SK-N-SH (cell line): ENCODE measurements at regions of chr5 and their contacts with region 1.

Region 1: GRCh38 chr5:173615884-173616576 is 420 bp downstream of the BOD1 start:
- DNase-seq: peak; percentile 72
- H3K4me3 ChIP-seq: peak overlapping the region; percentile 91 to 96
- H3K27ac ChIP-seq: peak overlapping the region; percentile 81 to 88
- H3K4me1 ChIP-seq: peaks cover 13 to 24% of the 10 kb centered on the region in 2 experiments; a peak in 3 of 4 replicates
- H3K27me3 ChIP-seq: no peaks in the 10 kb centered on the region
- CTCF ChIP-seq: peak; percentile 68
- EP300 ChIP-seq: no peak
- RAD21 ChIP-seq: peak; percentile 37

Region 2: DNA sequence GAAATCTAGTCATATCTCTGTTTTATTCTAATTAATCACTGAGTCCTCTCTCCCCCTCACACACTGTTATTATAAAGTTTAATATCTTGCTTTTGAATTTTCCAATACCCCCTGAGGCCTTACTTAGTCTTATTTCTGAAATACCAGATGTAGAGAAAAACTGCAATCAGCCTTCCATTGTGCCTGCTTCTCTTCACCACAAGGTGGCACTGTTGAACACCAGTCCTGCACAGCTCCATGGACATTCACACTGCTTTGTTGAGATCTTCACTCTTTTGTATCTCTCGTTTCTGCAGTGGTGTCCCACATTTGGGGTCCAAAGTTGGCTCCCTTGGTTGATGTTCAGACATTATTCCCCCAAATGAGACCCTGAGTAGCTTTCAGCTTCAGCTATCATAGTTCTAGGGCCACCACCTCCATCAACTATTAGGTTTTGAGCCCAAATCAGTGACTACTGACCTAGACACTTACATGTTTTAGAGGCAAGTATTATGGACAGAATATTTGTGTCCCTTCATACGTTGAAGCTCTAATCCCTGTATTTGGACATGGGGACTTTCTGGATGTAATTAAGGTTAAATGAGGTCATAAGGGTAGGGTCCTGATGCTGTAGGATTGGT is 23.9 kb before region 1 on chr5:
- CTCF ChIA-PET with region 1: interaction called, 13 read pairs
- POLR2A ChIA-PET with region 1: no interaction called
- DNase-seq: peak; percentile 35
- H3K4me3 ChIP-seq: no peak overlapping the region
- H3K27ac ChIP-seq: no peak overlapping the region
- H3K4me1 ChIP-seq: no peaks in the 10 kb centered on the region
- H3K27me3 ChIP-seq: no peaks in the 10 kb centered on the region
- CTCF ChIP-seq: peak; percentile 64
- EP300 ChIP-seq: no peak
- RAD21 ChIP-seq: no peak; the same call in 1 of the 2 replicates

Region 3: DNA sequence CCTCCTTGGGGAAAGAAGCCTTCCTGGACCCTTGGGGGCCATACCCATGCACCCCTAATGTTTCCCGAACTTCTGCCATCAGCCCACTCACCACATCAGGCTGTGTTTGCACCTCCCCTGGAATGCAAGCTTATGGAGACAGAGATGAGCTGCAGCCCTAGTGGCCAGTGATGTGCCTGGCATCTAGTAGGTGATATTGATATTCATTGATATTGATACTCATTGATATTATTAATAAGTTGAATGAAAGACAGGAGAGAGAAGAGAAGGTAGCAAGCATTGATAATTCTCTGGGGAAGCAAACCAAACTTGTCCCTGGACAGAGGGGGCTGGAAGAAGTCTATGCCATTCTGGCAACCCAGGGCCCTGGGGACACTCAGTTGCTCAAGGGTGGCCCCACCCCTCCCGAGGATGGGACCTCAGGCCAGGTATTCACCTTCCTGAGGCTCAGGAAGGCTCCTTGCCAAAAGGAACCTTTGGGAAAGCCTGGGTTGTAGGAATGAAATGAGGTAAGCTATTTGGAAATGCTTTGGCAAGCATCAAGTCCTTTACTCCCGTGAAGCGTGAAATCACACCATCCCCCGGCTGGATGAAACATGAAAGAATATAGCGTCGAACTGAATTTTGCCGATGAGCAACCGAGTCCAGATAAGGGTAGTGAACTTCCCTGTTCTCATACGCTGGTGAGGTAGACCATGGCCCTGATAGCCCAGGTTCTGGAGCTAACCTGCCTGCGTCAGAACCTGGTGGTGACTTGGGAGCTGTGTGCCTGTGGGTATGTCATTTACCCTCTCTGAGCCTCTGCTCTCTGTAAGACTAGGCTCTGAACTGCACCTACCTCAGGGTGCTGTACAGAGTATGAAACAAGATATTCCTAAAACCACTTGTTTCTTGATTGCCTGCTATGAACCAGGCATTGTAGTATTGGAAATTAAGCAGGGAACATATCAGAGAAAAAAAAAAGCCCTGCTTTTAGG is 105.5 kb after region 1 on chr5:
- CTCF ChIA-PET with region 1: interaction called, 11 read pairs
- POLR2A ChIA-PET with region 1: interaction called, 4 read pairs
- DNase-seq: no peak
- H3K4me3 ChIP-seq: no peak overlapping the region
- H3K27ac ChIP-seq: peak overlapping the region in 1 of 2 experiments; percentile 95; a peak in 2 of 4 replicates
- H3K4me1 ChIP-seq: peaks cover 0 to 50% of the 10 kb centered on the region in 2 experiments; a peak in 2 of 4 replicates
- H3K27me3 ChIP-seq: no peaks in the 10 kb centered on the region; the same call in 1 of the 2 replicates
- CTCF ChIP-seq: peak; percentile 17; the same call in 1 of the 2 replicates
- EP300 ChIP-seq: no peak
- RAD21 ChIP-seq: no peak

Region 4: GRCh38 chr5:173972925-173973615 is 357.0 kb after region 1 on chr5:
- CTCF ChIA-PET with region 1: interaction called, 162 read pairs
- POLR2A ChIA-PET with region 1: interaction called, 8 read pairs
- DNase-seq: peak; percentile 91
- H3K4me3 ChIP-seq: peak overlapping the region in 1 of 2 experiments; percentile 33; a peak in 2 of 4 replicates
- H3K27ac ChIP-seq: no peak overlapping the region
- H3K4me1 ChIP-seq: peaks cover 0 to 8% of the 10 kb centered on the region in 2 experiments; a peak in 1 of 4 replicates
- H3K27me3 ChIP-seq: no peaks in the 10 kb centered on the region
- CTCF ChIP-seq: peak; percentile 83
- EP300 ChIP-seq: no peak
- RAD21 ChIP-seq: peak; percentile 96

Region 5: DNA sequence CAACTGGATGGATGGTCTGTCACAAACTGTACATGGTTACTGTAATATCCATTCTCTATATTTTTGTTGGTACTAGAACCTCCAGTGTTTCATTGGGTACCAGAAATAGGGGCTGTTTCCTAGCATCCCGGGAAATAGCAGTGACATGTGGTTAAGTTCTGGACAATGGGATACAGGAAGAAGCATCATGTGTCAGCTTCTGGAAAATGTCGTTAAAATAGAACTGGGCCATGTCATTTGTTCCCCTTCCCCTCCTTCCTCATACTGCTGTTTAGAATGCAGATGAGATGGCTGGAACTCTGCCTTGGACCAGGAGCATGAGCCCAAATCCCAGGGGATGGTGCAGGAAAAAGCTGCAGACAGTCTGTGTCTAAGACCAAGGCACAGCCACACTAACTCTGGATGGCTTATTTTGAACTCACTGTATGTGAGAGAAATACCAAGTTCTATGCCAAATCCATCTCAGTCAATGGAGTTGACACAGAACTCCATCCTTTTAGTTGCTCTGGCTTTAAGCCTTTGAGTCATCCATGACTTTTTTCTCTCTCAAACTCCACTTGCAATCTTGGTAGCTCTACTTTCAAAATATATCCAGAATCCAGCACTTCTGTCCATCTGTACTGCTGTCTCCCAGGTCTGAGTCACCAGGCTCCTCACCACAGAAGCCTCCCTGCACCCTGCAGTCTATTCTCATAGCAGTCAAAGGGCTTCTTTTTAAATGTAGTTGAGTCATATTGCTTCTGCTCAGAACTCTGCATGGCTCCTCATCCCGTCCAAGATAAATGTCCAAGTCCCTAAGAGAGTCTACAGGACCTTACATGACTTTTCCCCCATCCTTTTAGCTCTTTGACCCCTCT is 613.7 kb after region 1 on chr5:
- CTCF ChIA-PET with region 1: no interaction called
- POLR2A ChIA-PET with region 1: no interaction called
- DNase-seq: no peak
- H3K4me3 ChIP-seq: no peak overlapping the region
- H3K27ac ChIP-seq: peak overlapping the region; percentile 3 to 50
- H3K4me1 ChIP-seq: peaks cover 0 to 23% of the 10 kb centered on the region in 2 experiments; a peak in 2 of 4 replicates
- H3K27me3 ChIP-seq: no peaks in the 10 kb centered on the region
- CTCF ChIP-seq: no peak
- EP300 ChIP-seq: no peak
- RAD21 ChIP-seq: no peak

Region 6: GRCh38 chr5:174317259-174317894 is 701.3 kb after region 1 on chr5:
- CTCF ChIA-PET with region 1: interaction called, 19 read pairs
- POLR2A ChIA-PET with region 1: no interaction called
- DNase-seq: peak; percentile 84
- H3K4me3 ChIP-seq: peak overlapping the region in 1 of 2 experiments; percentile 33; a peak in 1 of 4 replicates
- H3K27ac ChIP-seq: no peak overlapping the region
- H3K4me1 ChIP-seq: peaks cover 0 to 12% of the 10 kb centered on the region in 2 experiments; a peak in 1 of 4 replicates
- H3K27me3 ChIP-seq: no peaks in the 10 kb centered on the region; the same call in 1 of the 2 replicates
- CTCF ChIP-seq: peak; percentile 85
- EP300 ChIP-seq: 0 out of 4 replicates have a peak, but pooled peaks of 1 of the 2 experiments have one; percentile 7
- RAD21 ChIP-seq: peak; percentile 99